ENCODE measurements at regions of chr10 and their contacts with region 1.

Region 1: DNA sequence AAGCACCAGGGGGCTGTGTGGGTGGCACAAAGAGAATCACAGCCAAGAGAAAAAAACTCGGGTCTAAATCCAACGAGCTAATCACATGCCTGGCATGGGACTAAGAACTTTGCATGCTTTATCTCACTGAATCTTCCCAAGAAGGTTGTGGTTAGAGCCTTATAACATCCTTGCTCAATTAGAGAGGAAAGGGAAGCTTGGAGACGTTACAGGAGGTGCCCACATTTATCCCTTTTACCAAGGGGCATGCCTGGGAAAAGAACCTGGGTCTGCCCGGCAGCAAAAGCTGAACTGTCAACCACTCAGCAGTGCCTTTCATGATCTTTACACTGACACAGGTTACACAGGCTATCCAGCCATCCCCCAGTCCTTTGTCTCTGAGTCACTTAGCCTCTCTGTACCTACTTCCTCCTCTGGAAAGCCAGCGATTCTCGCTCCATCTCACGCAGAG is 190.1 kb downstream of the PRPF18 start:
- DNase-seq: no peak
- CTCF ChIP-seq: no peak

Region 2: DNA sequence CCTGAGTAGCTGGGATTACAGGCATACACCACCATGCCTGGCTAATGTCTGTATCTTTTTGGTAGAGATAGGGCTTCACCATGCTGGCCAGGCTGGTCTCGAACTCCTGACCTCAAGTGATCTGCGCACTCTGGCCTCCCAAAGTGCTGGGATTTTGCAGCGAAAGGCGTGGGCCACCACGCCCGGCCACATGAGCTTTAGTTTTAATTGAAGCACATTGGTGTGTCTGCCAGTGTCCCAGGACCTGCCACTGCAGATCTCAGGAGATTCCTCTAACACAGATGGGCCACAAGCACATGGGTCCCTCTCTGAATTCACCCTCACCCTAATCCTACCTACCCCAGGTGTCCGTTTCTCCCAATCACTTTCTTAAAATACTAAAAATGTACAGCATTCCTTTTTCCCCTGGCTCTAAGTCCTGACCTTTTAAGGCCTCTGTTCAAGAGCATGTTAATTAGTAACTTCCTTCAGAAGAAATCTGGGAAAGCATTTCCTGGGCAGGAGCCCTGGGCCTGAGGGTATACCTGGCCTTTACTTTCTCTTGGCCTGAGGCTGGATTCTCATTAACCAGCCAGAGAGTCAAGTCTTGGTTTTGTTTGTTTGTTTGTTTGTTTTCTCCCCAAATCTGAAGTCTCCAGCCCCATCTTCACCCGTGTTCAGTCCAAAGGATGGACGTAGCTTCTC is 107.6 kb before region 1 on chr10:
- in situ Hi-C with region 1: loop called (anchors 5 kb)
- DNase-seq: no peak
- CTCF ChIP-seq: no peak

Region 3: GRCh38 chr10:13698217-13698616 is 78.7 kb before region 1 on chr10:
- in situ Hi-C with region 1: no loop called
- DNase-seq: no peak
- CTCF ChIP-seq: no peak

Region 4: DNA sequence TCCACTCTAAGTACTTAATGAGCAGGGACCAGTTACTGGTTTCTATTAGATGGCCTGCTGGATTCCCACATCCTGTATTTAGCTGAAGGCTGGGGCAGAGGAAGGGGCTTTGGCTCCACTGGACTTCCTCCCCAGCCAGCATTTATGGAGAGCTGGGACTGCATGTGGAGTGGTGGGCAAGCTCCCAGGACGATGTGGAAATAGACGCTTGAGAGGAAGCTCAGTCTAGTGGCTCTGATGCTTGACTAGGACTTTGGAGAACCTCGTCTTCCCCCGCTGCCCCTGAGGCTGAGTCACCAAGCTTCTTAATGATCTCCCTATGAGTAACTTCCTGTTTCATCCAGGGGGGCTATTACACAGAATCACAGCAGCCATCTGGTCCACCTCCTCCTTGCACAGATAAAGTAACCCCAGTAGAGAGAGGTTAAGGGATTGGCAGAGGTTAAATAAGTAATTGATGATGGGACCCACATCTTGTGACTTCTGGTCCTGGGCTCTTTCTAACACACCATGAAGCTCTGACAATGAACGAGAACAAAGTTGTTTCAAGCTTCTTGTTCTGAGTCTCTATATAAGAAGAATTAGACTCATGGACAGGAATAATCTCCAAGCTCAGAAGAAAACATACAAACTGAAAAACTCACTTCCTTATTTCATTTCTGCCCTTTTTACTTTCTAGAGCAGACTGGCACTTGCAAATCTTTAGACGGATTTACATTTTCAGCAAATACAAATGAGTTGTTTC is 63.9 kb before region 1 on chr10:
- in situ Hi-C with region 1: loop called (anchors 10 kb)
- DNase-seq: peak; percentile 71
- CTCF ChIP-seq: no peak

Region 5: GRCh38 chr10:14625192-14625631 is 848.3 kb after region 1 on chr10:
- in situ Hi-C with region 1: no loop called
- DNase-seq: no peak
- CTCF ChIP-seq: no peak

Measured in GM13977 (cell line).